Tibial artery (tissue), 4 donors: ENCODE measurements at regions of chr18 and their contacts with region 1.

Region 1: GRCh38 chr18:59699750-59700534 is 2.7 kb upstream of the CCBE1 start:
- DNase-seq: no peak
- H3K4me3 ChIP-seq: no peak overlapping the region
- H3K27ac ChIP-seq: no peak overlapping the region
- H3K4me1 ChIP-seq: peaks cover 0 to 21% (median 19%) of the 10 kb centered on the region in 4 donors
- H3K27me3 ChIP-seq: peaks cover 0 to 38% of the 10 kb centered on the region in 2 donors
- CTCF ChIP-seq: no peak

Region 2: GRCh38 chr18:59783138-59783537 is 83.2 kb after region 1 on chr18:
- intact Hi-C with region 1: loop called (anchors 10 kb)
- DNase-seq: no peak
- H3K4me3 ChIP-seq: no peak overlapping the region
- H3K27ac ChIP-seq: no peak overlapping the region
- H3K4me1 ChIP-seq: no peaks in the 10 kb centered on the region
- H3K27me3 ChIP-seq: no peaks in the 10 kb centered on the region
- CTCF ChIP-seq: peak in 1 of 2 experiments; percentile 4